ENCODE measurements at regions of chr1 and their contacts with region 1.

Region 1: GRCh38 chr1:3012456-3013291 is 8.6 kb upstream of the ACTRT2 start:
- DNase-seq: peak; percentile 34 to 60 (median 51)
- H3K4me3 ChIP-seq: no peak overlapping the region
- H3K27ac ChIP-seq: no peak overlapping the region
- H3K4me1 ChIP-seq: no peaks in the 10 kb centered on the region
- H3K27me3 ChIP-seq: peaks cover 28% of the 10 kb centered on the region
- CTCF ChIP-seq: peak; percentile 34 to 94 (median 58)
- POLR2A ChIP-seq: no peak

Region 2: GRCh38 chr1:3283849-3284248 is 271.2 kb after region 1 on chr1:
- intact Hi-C with region 1: loop called in 1 of 2 experiments (anchors 10 kb)
- DNase-seq: peak in 5 of 7 donors; percentile 27 to 42 (median 37)
- H3K4me3 ChIP-seq: no peak overlapping the region
- H3K27ac ChIP-seq: no peak overlapping the region
- H3K4me1 ChIP-seq: no peaks in the 10 kb centered on the region
- H3K27me3 ChIP-seq: peaks cover 28% of the 10 kb centered on the region
- CTCF ChIP-seq: peak; percentile 45 to 66 (median 55)
- POLR2A ChIP-seq: no peak

Region 3: GRCh38 chr1:3333903-3334302 is 321.2 kb after region 1 on chr1:
- intact Hi-C with region 1: loop called in 1 of 2 experiments (anchors 5 kb)
- DNase-seq: no peak
- H3K4me3 ChIP-seq: no peak overlapping the region
- H3K27ac ChIP-seq: no peak overlapping the region
- H3K4me1 ChIP-seq: no peaks in the 10 kb centered on the region
- H3K27me3 ChIP-seq: no peaks in the 10 kb centered on the region
- CTCF ChIP-seq: no peak
- POLR2A ChIP-seq: no peak

Region 4: DNA sequence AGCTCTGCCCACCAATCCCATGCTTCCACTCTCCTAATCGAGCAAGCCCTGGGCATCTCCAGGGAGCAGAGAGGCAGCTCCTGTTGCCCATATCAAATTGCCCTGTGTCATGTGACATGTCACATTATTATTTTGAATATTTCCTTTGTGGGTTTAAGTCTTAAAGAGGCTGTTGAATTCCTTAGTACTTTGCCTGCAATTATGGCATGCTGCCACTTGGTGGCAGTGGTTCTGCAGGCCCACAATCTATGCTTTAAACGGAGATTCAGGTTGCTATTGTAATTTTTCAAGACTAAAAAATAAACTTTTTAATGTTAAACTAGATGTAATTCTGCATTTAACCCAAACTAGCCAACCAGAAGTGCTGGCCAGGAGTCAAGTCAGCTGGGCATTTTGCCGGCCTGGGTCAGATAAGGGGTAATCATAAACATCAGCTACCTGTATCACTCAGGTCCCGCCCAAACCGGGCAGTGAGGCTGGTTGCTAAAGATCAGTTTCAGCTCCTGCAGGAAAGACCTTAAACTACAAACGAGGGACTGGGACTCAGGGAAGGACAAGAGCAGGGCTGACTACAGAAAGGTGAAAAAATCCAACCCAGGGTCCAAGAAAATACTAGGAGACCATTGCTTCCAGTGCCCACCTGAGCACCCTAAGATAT is 404.5 kb after region 1 on chr1:
- intact Hi-C with region 1: loop called in 1 of 2 experiments (anchors 5 kb)
- DNase-seq: no peak
- H3K4me3 ChIP-seq: no peak overlapping the region
- H3K27ac ChIP-seq: no peak overlapping the region
- H3K4me1 ChIP-seq: no peaks in the 10 kb centered on the region
- H3K27me3 ChIP-seq: peaks cover 9% of the 10 kb centered on the region
- CTCF ChIP-seq: peak in 1 of 6 experiments; percentile 17
- POLR2A ChIP-seq: no peak

Region 5: GRCh38 chr1:3423245-3423829 is 410.7 kb after region 1 on chr1:
- intact Hi-C with region 1: loop called (anchors 1 to 5 kb)
- DNase-seq: peak in 1 of 7 donors; percentile 12
- H3K4me3 ChIP-seq: no peak overlapping the region
- H3K27ac ChIP-seq: no peak overlapping the region
- H3K4me1 ChIP-seq: no peaks in the 10 kb centered on the region
- H3K27me3 ChIP-seq: no peaks in the 10 kb centered on the region
- CTCF ChIP-seq: no peak
- POLR2A ChIP-seq: no peak

Measured in adrenal gland (tissue), 19 donors.